ENCODE measurements at regions of chr5 and their contacts with region 1.

Region 1: DNA sequence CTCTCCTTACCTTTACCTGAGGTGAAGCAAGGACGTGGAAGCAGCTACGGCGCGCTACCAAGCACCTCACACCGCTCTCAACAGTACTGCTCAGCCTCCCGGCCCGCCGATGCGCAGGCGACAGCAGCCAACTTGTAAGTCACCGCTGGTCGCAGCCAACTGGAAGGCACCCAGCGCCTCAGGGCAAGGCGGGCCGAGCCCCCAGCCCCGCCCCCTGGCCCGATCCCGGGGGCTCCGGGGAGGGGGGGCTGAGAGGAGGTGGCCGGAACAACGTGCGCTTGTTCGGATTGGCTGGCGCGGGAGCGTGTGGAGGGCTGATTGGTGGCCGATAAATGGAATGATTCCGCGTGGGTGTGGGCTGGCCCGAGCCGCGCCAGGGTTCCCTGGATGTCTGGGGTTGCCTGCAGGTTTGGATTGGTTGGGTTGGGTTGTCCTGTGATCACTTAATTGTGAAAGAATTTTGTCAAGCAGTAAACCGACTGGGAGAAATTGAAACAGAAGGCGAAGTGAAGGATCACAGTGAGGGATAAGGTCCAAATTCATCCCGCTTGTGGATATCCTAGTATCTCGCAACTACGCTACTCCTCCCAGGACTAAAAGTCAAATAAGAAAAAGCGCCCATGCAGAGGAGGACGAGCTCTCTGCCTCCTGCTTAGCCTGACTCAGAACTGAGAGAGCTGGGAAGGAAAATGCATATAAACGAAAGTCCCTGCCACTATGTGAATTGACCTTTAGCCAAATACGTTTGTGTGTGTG is at the start of gene STARD4:
- DNase-seq: peak; percentile 98 to 99
- H3K4me3 ChIP-seq: peak within 1 kb of the TSS; percentile 68
- H3K4me3 Mint-ChIP-seq: peak within 1 kb of the TSS; percentile 95
- H3K27ac Mint-ChIP-seq: peak within 1 kb of the TSS; percentile 95
- H3K4me1 ChIP-seq: peaks cover 46% of the 10 kb centered on the region
- H3K4me1 Mint-ChIP-seq: peaks cover 46% of the 10 kb centered on the region
- H3K27me3 ChIP-seq: no peaks in the 10 kb centered on the region
- H3K27me3 Mint-ChIP-seq: no peaks in the 10 kb centered on the region
- CTCF ChIP-seq: no peak
- total RNA-seq, gene STARD4: 102 and 113 TPM in 2 replicates

Region 2: GRCh38 chr5:111530298-111530740 is 17.8 kb after region 1 on chr5:
- CTCF ChIA-PET with region 1: no interaction called
- POLR2A ChIA-PET with region 1: interaction called, 8 read pairs
- intact Hi-C with region 1: loop called (anchors 1 kb)
- DNase-seq: peak; percentile 89 to 94
- H3K4me3 ChIP-seq: peak overlapping the region; percentile 26
- H3K4me3 Mint-ChIP-seq: peak overlapping the region; percentile 71
- H3K27ac Mint-ChIP-seq: peak overlapping the region; percentile 91
- H3K4me1 ChIP-seq: peaks cover 9% of the 10 kb centered on the region
- H3K4me1 Mint-ChIP-seq: peaks cover 12% of the 10 kb centered on the region
- H3K27me3 ChIP-seq: no peaks in the 10 kb centered on the region
- H3K27me3 Mint-ChIP-seq: no peaks in the 10 kb centered on the region
- CTCF ChIP-seq: no peak

Region 3: GRCh38 chr5:111706345-111706744 is 193.8 kb after region 1 on chr5:
- CTCF ChIA-PET with region 1: no interaction called
- POLR2A ChIA-PET with region 1: no interaction called
- intact Hi-C with region 1: no loop called
- DNase-seq: no peak
- H3K4me3 ChIP-seq: no peak overlapping the region
- H3K4me3 Mint-ChIP-seq: no peak overlapping the region
- H3K27ac Mint-ChIP-seq: no peak overlapping the region
- H3K4me1 ChIP-seq: no peaks in the 10 kb centered on the region
- H3K4me1 Mint-ChIP-seq: no peaks in the 10 kb centered on the region
- H3K27me3 ChIP-seq: no peaks in the 10 kb centered on the region
- H3K27me3 Mint-ChIP-seq: peaks cover 3% of the 10 kb centered on the region
- CTCF ChIP-seq: no peak

Region 4: DNA sequence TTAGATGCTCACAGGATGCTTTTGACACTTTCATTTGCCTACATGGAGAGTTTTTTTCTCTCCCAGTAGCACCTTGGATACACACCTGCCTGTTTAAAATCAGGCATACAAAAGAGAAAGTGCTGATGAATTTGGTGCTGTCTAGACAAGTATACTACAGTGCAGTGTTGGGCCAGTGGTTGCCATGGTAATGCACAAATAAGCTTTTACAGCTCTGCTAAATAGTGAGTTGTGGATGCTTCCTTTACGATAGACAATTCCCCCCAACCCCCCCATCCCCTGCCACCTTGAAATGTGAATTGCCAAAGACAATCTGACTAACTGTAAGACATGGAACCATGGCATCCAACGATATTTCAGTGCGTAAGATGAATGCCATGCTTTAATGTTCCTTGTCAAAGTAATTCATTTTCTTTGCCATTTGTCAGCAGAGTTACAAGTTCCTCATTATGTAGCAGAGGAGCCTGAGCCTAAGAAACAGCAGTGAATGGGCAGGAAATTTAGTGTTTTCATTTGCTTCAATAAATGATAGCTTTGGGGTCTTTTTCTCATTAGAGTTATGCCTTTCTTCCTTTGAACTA is 335.9 kb after region 1 on chr5:
- CTCF ChIA-PET with region 1: no interaction called
- POLR2A ChIA-PET with region 1: no interaction called
- intact Hi-C with region 1: no loop called
- DNase-seq: no peak
- H3K4me3 ChIP-seq: no peak overlapping the region
- H3K4me3 Mint-ChIP-seq: no peak overlapping the region
- H3K27ac Mint-ChIP-seq: no peak overlapping the region
- H3K4me1 ChIP-seq: no peaks in the 10 kb centered on the region
- H3K4me1 Mint-ChIP-seq: no peaks in the 10 kb centered on the region
- H3K27me3 ChIP-seq: no peaks in the 10 kb centered on the region
- H3K27me3 Mint-ChIP-seq: peaks cover 10% of the 10 kb centered on the region
- CTCF ChIP-seq: no peak

Region 5: GRCh38 chr5:112160652-112161391 is 648.3 kb after region 1 on chr5:
- CTCF ChIA-PET with region 1: interaction called, 5 read pairs
- POLR2A ChIA-PET with region 1: interaction called, 4 read pairs
- intact Hi-C with region 1: loop called (anchors 1 kb)
- DNase-seq: peak; percentile 89 to 94
- H3K4me3 ChIP-seq: peak overlapping the region; percentile 94
- H3K4me3 Mint-ChIP-seq: peak overlapping the region; percentile 83
- H3K27ac Mint-ChIP-seq: peak overlapping the region; percentile 85
- H3K4me1 ChIP-seq: peaks cover 6% of the 10 kb centered on the region
- H3K4me1 Mint-ChIP-seq: peaks cover 21% of the 10 kb centered on the region
- H3K27me3 ChIP-seq: no peaks in the 10 kb centered on the region
- H3K27me3 Mint-ChIP-seq: peaks cover 9% of the 10 kb centered on the region
- CTCF ChIP-seq: peak; percentile 97 to 98

Region 6: DNA sequence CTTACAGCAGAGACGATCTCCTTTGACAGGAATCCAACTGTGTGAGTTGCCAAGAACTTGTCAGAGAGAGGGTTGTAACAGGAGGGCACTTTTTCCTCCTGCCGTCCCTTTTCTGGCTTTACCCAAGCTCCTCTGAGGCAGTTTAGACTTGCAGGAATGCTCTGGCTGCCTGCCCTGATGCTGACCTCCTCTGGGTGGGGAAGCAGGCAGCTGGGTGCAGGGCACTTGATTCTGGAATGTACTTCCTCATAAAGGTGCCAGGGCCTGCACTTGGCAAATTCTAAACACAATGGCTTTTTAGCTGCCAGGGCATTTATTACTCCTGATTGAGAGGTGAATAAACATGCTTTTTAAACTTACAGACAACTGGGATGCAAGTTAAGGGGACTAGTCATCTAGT is 716.1 kb after region 1 on chr5:
- CTCF ChIA-PET with region 1: no interaction called
- POLR2A ChIA-PET with region 1: no interaction called
- intact Hi-C with region 1: loop called (anchors 10 kb)
- DNase-seq: peak; percentile 69 to 76
- H3K4me3 ChIP-seq: no peak overlapping the region
- H3K4me3 Mint-ChIP-seq: peak overlapping the region; percentile 56
- H3K27ac Mint-ChIP-seq: peak overlapping the region; percentile 76
- H3K4me1 ChIP-seq: peaks cover 23% of the 10 kb centered on the region
- H3K4me1 Mint-ChIP-seq: no peaks in the 10 kb centered on the region
- H3K27me3 ChIP-seq: no peaks in the 10 kb centered on the region; the same call in 1 of the 2 replicates
- H3K27me3 Mint-ChIP-seq: no peaks in the 10 kb centered on the region
- CTCF ChIP-seq: no peak

Measured in Caco-2 (cell line).